Panc1 (cell line): ENCODE measurements at regions of chr2 and their contacts with region 1.

Region 1: DNA sequence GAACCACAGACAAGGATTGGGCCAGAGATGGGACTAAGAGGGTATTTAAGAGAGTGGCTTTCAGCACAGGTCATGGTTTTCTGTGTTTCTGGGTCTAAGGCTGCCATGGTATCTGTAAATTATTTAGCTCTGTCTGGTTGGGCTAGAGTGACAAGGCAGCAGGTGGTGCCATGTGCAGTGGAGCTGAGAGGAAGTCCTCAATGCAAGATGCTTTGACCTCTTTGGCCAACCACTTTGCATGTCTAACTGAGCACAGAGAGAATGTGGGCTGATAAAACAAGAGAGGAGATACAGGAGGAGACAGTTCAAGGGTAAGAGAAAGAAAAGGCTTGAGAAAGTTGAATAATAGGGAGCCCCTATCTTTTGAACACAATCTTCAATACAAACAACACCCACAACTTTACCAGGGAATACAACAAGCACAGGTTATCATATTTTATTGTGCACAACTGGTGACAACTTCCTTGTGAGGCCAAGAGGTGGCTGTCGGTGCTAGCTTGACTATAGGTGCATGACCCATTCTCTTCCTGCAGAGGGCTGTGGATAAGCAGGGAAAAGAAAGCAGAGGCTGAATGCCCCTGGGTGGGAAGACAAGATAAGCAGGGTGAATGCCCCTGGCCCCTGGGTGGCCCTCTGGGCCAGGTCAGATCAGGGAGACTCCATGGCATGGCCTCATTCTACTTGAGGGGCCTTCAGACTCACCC is 12.3 kb downstream of the FLACC1 start:
- DNase-seq: no peak
- ATAC-seq: peak; percentile 76
- H3K4me3 ChIP-seq: no peak overlapping the region
- H3K27ac ChIP-seq: no peak overlapping the region
- H3K4me1 ChIP-seq: no peaks in the 10 kb centered on the region
- H3K27me3 ChIP-seq: no peaks in the 10 kb centered on the region
- CTCF ChIP-seq: no peak; the same call in 1 of the 2 replicates

Region 2: DNA sequence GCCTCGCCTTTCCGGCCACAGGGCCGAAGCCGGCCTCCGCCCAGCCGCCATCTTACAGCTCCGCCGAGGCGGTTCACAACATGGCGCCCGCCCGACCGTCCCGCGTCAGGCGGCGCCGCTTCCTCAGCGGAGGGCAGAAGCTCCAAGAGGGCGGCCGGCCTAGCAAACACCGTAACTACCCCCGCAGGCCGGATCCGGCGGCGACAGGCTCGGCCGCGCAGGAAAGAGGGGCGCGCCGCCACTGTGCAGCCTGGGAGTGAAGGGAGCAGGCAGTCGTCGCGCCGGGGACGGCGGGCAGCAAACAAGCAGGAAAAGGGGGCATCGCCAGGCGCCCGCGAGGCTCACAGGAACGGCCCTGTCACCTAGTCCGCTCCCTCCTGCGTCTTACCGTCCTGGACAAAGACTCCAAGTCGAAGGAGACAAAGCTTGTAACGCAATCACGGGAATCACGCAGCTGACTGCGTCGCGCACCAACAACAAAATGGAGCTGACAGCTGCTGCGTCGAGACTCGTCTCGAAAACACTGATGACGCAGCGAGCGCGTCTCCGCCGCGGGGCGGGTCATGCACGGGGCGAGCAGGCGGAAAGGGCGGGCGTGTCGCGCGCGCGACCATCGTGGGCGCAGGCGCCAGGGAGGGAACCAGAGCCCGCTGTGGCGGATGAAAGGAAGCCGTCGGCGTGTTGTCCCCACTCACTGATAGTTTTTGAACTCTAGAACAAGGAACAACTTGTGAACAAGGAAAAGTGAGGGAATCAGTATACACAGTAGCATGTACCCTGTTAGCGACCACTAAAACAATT is 480.4 kb before region 1 on chr2 and contains the start of gene CLK1:
- CTCF ChIA-PET with region 1: no interaction called
- POLR2A ChIA-PET with region 1: no interaction called
- in situ Hi-C with region 1: no loop called
- intact Hi-C with region 1: no loop called
- DNase-seq: peak; percentile 75
- ATAC-seq: peak; percentile 95
- H3K4me3 ChIP-seq: peak within 1 kb of the TSS; percentile 93 to 97
- H3K27ac ChIP-seq: peak within 1 kb of the TSS; percentile 99
- H3K4me1 ChIP-seq: peaks cover 23% of the 10 kb centered on the region
- H3K27me3 ChIP-seq: no peaks in the 10 kb centered on the region
- CTCF ChIP-seq: no peak
- total RNA-seq, gene CLK1: 46.6 TPM

Region 3: GRCh38 chr2:201275990-201276389 is 68.8 kb before region 1 on chr2:
- CTCF ChIA-PET with region 1: no interaction called
- POLR2A ChIA-PET with region 1: no interaction called
- in situ Hi-C with region 1: no loop called
- intact Hi-C with region 1: no loop called
- DNase-seq: no peak
- ATAC-seq: no peak
- H3K4me3 ChIP-seq: no peak overlapping the region
- H3K27ac ChIP-seq: no peak overlapping the region
- H3K4me1 ChIP-seq: no peaks in the 10 kb centered on the region
- H3K27me3 ChIP-seq: no peaks in the 10 kb centered on the region
- CTCF ChIP-seq: no peak; the same call in 1 of the 2 replicates

Region 4: DNA sequence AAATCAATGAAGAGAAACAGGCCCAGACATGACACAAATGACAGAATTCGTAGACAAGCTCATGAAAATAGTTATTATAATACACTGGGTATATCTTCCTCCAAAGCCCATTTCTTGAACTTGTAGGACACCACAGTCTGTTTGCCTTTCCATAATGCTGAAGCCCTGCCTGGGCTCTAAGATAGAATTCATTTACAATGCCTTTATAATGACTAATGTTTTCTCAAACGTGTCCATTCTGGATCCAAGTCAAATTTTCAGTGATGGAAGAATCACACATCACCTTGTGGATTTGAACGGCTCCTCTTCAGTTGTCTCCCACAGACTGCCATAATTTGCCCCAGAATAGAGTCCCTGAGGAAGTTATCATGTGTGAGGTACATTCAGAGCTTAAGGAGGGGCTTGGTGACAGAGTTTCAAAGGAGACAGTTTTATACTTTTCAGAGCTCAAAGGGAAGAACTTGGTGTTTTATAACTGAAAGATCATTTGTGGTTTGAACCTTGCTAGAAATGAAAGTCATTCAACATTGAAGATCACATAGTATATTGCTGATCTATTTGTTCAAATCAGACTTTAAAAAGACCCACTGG is 46.3 kb before region 1 on chr2:
- CTCF ChIA-PET with region 1: no interaction called
- POLR2A ChIA-PET with region 1: no interaction called
- in situ Hi-C with region 1: no loop called
- intact Hi-C with region 1: loop called (anchors 5 kb)
- DNase-seq: no peak
- ATAC-seq: no peak
- H3K4me3 ChIP-seq: no peak overlapping the region
- H3K27ac ChIP-seq: no peak overlapping the region
- H3K4me1 ChIP-seq: no peaks in the 10 kb centered on the region
- H3K27me3 ChIP-seq: no peaks in the 10 kb centered on the region
- CTCF ChIP-seq: no peak

Region 5: DNA sequence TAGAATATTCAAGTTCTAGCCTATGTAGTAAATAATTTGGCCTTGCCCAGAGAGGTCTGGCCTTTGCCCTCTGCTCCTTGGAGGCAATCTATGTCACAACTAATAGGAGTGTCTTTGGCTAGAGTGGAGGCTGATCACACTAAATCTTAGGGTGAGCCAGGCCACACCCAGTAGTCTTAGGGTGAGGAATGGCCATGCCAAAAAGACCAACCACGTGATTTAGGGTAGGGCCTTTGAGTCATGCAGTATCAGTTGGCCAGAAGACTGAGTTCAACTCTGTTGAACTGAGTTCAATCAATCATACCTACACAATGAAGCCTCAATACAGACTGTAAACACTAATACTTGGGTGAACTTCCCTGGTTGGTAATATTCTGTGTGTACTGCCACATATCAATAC is 38.3 kb after region 1 on chr2:
- CTCF ChIA-PET with region 1: no interaction called
- POLR2A ChIA-PET with region 1: no interaction called
- in situ Hi-C with region 1: no loop called
- intact Hi-C with region 1: no loop called
- DNase-seq: no peak
- ATAC-seq: no peak
- H3K4me3 ChIP-seq: no peak overlapping the region
- H3K27ac ChIP-seq: no peak overlapping the region
- H3K4me1 ChIP-seq: no peaks in the 10 kb centered on the region
- H3K27me3 ChIP-seq: no peaks in the 10 kb centered on the region
- CTCF ChIP-seq: no peak